ENCODE measurements at regions of chr22 and their contacts with region 1.

Region 1: DNA sequence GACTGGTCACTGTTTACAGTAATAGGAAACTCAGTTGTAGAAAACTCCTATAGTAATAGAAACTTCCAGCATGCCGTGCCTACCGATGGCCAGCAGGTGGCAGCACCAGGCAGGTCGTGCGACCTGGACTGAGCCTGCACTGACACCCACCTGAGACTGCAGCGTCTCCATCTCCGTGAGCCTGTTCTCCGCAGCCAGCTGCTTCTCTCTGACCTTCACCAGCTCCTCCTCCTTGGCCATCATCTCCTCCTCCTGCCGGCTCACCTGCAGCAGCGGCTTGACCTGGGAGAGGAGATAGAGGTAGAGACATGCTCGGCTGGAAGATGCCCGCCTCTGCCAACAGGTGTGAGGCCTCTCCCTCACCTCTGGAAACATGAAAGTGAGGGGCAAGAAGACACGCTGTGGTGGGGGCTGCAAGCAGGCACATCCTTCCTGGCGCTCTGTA is 48.5 kb downstream of the APOL1 start:
- DNase-seq: peak; percentile 83 to 85
- H3K4me3 ChIP-seq: no peak overlapping the region
- H3K4me3 Mint-ChIP-seq: no peak overlapping the region
- H3K27ac Mint-ChIP-seq: peak overlapping the region; percentile 26
- H3K4me1 ChIP-seq: no peaks in the 10 kb centered on the region
- H3K4me1 Mint-ChIP-seq: no peaks in the 10 kb centered on the region
- H3K27me3 ChIP-seq: no peaks in the 10 kb centered on the region
- H3K27me3 Mint-ChIP-seq: no peaks in the 10 kb centered on the region
- CTCF ChIP-seq: peak; percentile 89 to 92

Region 2: DNA sequence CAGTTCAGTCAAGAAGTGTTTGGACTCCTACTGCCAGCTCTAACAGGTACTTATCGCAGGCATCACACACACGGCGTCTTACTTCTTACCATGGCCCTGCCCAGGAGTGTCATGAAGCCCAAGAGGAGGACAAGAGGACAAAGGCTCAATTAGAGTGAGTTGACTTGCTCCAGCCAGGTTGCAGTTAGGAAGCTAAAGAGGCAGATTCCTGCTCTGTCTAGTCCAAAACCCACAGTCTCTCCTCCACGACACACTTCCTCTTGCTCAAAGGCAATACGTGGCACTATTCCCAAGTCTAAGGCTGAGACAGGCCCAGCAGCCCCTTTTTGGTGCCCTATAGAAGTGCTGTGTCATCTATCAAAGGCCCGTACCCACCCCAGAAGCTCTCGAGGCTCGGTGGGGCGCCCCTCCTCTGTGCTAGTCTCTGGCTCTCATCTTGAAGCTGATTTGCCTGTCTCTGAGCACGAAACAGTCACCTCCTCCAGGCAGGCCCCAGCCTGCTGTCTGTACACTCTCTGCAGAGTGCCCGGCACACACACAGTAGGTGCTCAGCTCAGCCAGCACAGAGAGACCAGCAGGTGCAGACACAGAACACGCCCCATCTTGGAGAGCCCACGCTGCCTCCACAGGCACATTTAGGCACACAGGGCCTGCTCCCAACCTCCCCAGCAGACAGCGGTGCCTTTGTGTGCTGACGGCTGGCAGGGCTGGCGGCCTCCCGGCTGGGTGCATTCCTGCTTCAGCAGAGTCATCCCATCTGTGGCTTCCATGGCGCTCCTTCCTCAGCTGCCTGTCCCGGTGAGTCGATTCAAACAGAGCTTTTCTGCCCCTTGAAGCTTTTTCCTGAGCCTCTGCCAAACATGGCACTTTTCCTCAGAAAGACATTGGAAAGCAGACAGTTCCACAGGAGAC is 33.6 kb after region 1 on chr22:
- CTCF ChIA-PET with region 1: no interaction called
- POLR2A ChIA-PET with region 1: no interaction called
- intact Hi-C with region 1: loop called (anchors 5 kb)
- DNase-seq: no peak
- H3K4me3 ChIP-seq: no peak overlapping the region
- H3K4me3 Mint-ChIP-seq: no peak overlapping the region
- H3K27ac Mint-ChIP-seq: peak overlapping the region; percentile 95
- H3K4me1 ChIP-seq: peaks cover 56% of the 10 kb centered on the region
- H3K4me1 Mint-ChIP-seq: peaks cover 51% of the 10 kb centered on the region
- H3K27me3 ChIP-seq: no peaks in the 10 kb centered on the region
- H3K27me3 Mint-ChIP-seq: no peaks in the 10 kb centered on the region
- CTCF ChIP-seq: no peak

Region 3: DNA sequence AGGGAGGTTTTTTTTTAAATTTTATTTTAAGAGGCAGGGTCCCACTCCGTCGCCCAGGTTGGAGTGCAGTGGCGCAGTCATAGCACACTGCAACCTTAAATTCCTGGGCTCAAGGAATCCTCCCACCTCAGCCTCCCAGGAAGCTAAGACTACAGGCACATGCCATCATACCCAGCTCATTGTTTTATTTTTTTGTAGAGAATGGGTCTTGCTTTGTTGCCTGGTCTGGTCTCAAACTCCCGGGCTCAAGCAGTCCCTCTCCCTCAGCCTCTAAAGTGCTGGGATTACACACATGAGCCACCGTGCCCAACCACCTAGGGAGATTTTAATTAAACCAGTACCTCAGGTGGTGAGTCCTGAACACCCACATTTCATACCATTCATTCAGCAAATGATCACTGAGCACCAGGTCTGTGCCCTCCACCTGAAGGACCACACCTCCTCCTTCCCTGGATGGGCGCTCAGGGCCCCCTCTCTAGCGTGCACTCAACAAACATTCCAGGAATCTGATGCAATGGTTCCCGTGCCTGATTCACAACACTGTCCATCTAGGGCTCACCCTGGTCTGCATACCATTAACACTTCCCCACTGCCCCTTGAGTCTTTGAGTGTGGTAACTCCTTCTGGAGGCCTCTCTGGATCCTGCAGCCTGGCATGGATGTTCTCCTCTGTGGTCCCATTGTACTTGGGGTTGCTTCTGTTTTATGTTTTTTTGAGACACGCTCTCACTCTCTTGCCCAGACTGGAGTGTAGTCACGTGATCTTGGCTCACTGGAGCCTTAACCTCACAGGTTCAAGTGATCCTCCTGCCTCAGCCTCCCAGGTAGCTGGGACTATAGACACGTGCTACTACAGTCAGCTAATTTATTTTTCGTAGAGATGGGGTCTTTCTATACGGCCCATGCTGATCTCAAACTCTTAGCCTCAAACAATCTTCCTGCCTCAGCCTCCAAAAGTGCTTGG is 96.0 kb after region 1 on chr22:
- CTCF ChIA-PET with region 1: no interaction called
- POLR2A ChIA-PET with region 1: no interaction called
- intact Hi-C with region 1: no loop called
- DNase-seq: peak; percentile 67 to 75
- H3K4me3 ChIP-seq: no peak overlapping the region
- H3K4me3 Mint-ChIP-seq: peak overlapping the region; percentile 47
- H3K27ac Mint-ChIP-seq: peak overlapping the region; percentile 93
- H3K4me1 ChIP-seq: peaks cover 51% of the 10 kb centered on the region
- H3K4me1 Mint-ChIP-seq: peaks cover 44% of the 10 kb centered on the region
- H3K27me3 ChIP-seq: no peaks in the 10 kb centered on the region
- H3K27me3 Mint-ChIP-seq: no peaks in the 10 kb centered on the region
- CTCF ChIP-seq: no peak

Region 4: DNA sequence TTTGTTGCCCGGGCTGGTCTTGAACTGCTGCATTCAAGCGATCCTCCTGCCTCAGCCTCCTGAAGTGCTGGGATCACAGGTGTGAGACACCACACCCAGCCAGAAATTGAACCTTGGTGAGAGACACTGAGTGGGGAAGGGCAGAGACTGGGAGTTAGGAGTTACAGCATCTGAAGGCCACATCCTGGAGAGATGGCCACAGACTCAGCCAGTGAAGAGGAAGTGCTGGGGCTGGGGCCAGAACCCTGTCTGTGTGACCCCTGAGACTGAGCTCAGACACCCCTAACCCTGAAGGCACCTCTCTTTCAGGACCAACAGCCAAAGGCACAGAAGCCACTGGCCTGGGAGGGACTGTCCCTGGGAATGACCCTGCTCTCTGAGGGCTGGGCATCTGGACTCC is 146.2 kb after region 1 on chr22:
- CTCF ChIA-PET with region 1: no interaction called
- POLR2A ChIA-PET with region 1: no interaction called
- intact Hi-C with region 1: loop called (anchors 1 kb)
- DNase-seq: no peak
- H3K4me3 ChIP-seq: no peak overlapping the region
- H3K4me3 Mint-ChIP-seq: no peak overlapping the region
- H3K27ac Mint-ChIP-seq: no peak overlapping the region
- H3K4me1 ChIP-seq: peaks cover 6% of the 10 kb centered on the region; the same call in 1 of the 2 replicates
- H3K4me1 Mint-ChIP-seq: peaks cover 7% of the 10 kb centered on the region
- H3K27me3 ChIP-seq: no peaks in the 10 kb centered on the region
- H3K27me3 Mint-ChIP-seq: no peaks in the 10 kb centered on the region
- CTCF ChIP-seq: no peak

Region 5: DNA sequence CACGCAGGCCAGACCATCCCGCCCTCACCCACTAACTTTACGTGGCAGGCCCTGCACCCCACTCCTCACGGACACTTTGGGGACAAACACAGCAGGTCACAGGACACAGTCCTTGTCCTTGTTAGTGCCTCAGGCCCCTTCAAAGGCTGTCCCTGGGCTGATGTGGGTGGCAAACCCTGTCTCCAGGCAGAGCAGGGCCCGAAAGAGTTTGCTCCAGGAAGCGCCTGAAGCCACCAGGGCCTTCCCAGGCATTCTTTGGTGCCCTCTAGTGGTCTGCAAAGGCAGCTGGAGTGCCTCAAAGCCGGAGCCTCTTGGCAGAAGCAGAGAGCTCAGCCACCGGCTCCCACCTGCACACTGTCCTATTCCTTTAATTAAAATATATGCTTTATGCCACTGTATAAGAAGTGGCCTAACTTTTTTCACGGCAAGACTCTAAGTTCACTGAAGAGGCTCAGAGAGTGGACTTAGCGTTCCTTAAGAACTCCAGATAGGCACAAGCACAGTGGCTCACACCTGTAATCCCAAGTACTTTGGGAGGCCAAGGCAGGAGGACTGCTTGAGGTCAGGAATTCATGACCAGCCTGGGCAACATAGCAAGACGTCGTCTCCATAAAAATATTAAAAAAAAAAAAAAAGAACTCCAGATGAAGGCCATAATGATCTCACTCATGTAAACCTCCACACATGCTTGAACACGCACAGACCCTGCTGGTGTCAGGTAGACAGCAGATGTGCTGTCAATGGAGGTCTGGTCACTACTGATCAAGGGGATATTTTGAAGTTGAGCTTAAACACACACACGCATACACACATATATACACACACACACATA is 169.0 kb after region 1 on chr22:
- CTCF ChIA-PET with region 1: interaction called, 29 read pairs
- POLR2A ChIA-PET with region 1: no interaction called
- intact Hi-C with region 1: loop called (anchors 1 kb)
- DNase-seq: peak; percentile 83 to 89
- H3K4me3 ChIP-seq: no peak overlapping the region
- H3K4me3 Mint-ChIP-seq: no peak overlapping the region
- H3K27ac Mint-ChIP-seq: peak overlapping the region; percentile 22
- H3K4me1 ChIP-seq: 0 out of 2 replicates have a peak, but pooled peaks cover 3% of the 10 kb centered on the region
- H3K4me1 Mint-ChIP-seq: no peaks in the 10 kb centered on the region
- H3K27me3 ChIP-seq: no peaks in the 10 kb centered on the region
- H3K27me3 Mint-ChIP-seq: no peaks in the 10 kb centered on the region
- CTCF ChIP-seq: peak; percentile 85 to 95

Measured in Caco-2 (cell line).